Activated CD4-positive, alpha-beta memory T cell treated with anti-CD3 and anti-CD28 coated beads, Interleukin-2, amount 10 ng/mL, durations not matched to agents 7 days and 5 days (primary cell): ENCODE measurements at regions of chr16 and their contacts with region 1.

Region 1: GRCh38 chr16:50806099-50807062 is 64.5 kb downstream of the CYLD start:
- DNase-seq: peak; percentile 87
- H3K4me3 Mint-ChIP-seq: peak overlapping the region; percentile 63
- H3K27ac Mint-ChIP-seq: peak overlapping the region; percentile 57
- H3K4me1 Mint-ChIP-seq: peaks cover 12% of the 10 kb centered on the region
- H3K27me3 Mint-ChIP-seq: no peaks in the 10 kb centered on the region

Region 2: GRCh38 chr16:50210266-50211038 is 595.9 kb before region 1 on chr16:
- CTCF ChIA-PET with region 1: interaction called, 16 read pairs
- POLR2A ChIA-PET with region 1: no interaction called
- DNase-seq: peak; percentile 76
- H3K4me3 Mint-ChIP-seq: no peak overlapping the region
- H3K27ac Mint-ChIP-seq: peak overlapping the region; percentile 4
- H3K4me1 Mint-ChIP-seq: peaks cover 35% of the 10 kb centered on the region
- H3K27me3 Mint-ChIP-seq: no peaks in the 10 kb centered on the region

Region 3: DNA sequence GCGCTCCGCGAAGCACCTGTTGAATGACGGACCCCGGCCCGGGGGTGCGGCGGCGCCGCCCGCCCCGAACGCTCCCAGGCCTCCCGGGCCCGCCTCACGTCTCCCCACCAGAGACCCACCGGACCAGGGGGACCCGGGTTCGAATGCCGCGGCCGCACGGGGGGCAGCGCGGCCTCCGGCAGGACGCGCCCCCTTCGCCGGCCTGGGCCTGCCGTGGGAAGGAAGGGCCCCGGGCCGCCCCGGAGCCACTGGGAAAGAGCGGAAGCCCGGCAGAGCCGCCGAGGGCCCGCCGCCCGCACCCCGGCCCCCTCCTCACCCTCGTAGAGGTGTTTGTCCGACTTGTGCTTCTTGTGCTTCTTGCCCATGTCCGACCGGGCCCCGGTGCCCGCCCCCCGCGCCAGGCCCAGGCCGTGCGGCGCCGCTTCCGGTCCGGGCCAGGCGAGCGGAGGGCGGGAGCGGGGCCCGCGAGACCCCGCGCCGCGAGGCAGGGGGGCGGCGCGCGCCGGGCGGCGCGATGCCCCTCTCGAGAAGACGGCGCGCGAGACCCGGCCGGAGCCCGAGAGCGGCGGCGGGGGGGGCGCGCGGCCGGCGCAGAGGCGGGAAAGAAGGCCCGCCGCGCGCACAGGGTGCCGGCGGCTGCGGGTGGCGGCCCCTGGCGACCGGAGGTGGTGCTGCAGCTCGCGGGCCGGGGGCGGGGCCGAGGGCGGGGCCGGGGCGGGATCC is 437.8 kb before region 1 on chr16 and contains the start of gene BRD7:
- CTCF ChIA-PET with region 1: interaction called, 16 read pairs
- POLR2A ChIA-PET with region 1: interaction called, 6 read pairs
- DNase-seq: peak; percentile 80
- H3K4me3 Mint-ChIP-seq: peak within 1 kb of the TSS; percentile 85
- H3K27ac Mint-ChIP-seq: peak within 1 kb of the TSS; percentile 71
- H3K4me1 Mint-ChIP-seq: peaks cover 46% of the 10 kb centered on the region
- H3K27me3 Mint-ChIP-seq: peaks cover 4% of the 10 kb centered on the region
- total RNA-seq, gene BRD7: 93.3 to 101 TPM

Region 4: GRCh38 chr16:50741808-50742575 is 64.4 kb before region 1 on chr16 and contains the start of gene CYLD:
- CTCF ChIA-PET with region 1: interaction called, 55 read pairs
- POLR2A ChIA-PET with region 1: no interaction called
- DNase-seq: peak; percentile 100
- H3K4me3 Mint-ChIP-seq: peak within 1 kb of the TSS; percentile 94
- H3K27ac Mint-ChIP-seq: peak within 1 kb of the TSS; percentile 94
- H3K4me1 Mint-ChIP-seq: peaks cover 39% of the 10 kb centered on the region
- H3K27me3 Mint-ChIP-seq: no peaks in the 10 kb centered on the region
- total RNA-seq, gene CYLD: 235 to 254 TPM

Region 5: DNA sequence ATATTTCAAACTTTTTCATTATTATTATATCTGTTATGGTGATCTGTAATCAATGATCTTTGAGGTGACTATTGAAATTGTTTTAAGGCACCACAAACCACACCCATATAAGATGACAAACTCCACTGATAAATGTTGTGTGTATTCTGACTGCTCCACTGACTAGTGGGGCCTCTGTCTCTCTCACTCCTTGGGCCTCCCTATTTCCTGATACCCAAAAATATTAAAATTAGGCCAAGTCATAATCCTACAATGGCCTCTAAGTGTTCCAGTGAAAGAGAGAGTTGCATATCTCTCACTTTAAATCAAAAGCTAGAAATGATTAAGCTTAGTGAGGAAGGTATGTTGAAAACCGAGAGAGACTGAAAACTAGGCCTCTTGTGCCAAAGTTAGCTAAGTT is 41.1 kb before region 1 on chr16:
- CTCF ChIA-PET with region 1: interaction called, 10 read pairs
- POLR2A ChIA-PET with region 1: no interaction called
- DNase-seq: no peak
- H3K4me3 Mint-ChIP-seq: no peak overlapping the region
- H3K27ac Mint-ChIP-seq: peak overlapping the region; percentile 67
- H3K4me1 Mint-ChIP-seq: peaks cover 85% of the 10 kb centered on the region
- H3K27me3 Mint-ChIP-seq: no peaks in the 10 kb centered on the region